Activated CD4-positive, alpha-beta T cell treated with anti-CD3 and anti-CD28 coated beads for 36 hours (primary cell): ENCODE measurements at regions of chr13 and their contacts with region 1.

Region 1: DNA sequence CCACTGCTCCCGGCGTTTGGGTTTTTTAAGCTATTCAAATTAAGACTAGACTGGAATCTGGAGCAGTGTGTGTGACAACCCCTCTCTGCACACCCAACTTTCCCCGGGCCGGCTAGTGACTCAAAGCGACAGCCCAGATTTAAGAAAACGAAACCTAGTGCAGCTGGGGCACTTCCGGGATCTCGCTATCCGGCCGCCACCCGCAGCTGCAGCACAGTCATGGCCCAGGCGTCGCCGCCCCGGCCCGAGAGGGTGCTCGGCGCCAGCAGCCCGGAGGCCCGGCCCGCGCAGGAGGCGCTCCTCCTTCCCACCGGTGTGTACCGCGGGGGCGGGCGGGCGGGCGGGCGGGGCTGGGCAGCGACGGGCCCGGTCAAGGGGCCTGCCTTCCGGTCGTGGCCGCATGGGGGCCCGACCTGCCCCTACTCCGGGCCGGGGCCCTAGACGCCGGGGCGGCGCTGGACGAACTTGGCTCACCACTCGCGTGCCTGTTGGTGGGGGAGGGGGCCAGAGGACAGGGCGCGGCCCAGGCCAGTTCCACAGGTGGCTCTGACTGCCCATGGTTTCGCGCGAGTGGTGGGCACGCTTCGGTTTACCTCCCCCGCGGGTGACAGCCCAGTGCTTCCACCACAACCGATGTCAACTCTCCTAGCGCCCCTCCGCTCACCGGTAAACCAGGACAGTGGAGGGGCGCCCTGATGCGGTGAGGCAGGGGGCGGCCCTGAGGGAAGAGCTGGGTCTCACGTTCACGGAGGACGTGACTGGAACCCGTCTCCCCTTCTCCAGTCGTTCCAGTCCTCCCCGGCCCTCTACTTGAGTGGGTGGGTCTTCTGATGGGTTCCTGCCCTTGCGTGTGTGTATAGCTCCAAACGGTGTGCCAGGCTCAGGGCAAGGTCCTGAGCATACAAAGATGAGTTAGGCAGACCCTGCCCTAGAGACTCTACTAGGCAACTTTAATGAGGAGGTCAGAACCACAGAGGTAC is at the start of gene PHF11:
- DNase-seq: peak; percentile 95
- ATAC-seq: peak; percentile 81
- H3K4me3 Mint-ChIP-seq: peak within 1 kb of the TSS; percentile 91
- H3K27ac Mint-ChIP-seq: peak within 1 kb of the TSS; percentile 99
- H3K4me1 Mint-ChIP-seq: peaks cover 49% of the 10 kb centered on the region
- H3K27me3 Mint-ChIP-seq: no peaks in the 10 kb centered on the region
- total RNA-seq, gene PHF11: 84.0 to 106 TPM

Region 2: DNA sequence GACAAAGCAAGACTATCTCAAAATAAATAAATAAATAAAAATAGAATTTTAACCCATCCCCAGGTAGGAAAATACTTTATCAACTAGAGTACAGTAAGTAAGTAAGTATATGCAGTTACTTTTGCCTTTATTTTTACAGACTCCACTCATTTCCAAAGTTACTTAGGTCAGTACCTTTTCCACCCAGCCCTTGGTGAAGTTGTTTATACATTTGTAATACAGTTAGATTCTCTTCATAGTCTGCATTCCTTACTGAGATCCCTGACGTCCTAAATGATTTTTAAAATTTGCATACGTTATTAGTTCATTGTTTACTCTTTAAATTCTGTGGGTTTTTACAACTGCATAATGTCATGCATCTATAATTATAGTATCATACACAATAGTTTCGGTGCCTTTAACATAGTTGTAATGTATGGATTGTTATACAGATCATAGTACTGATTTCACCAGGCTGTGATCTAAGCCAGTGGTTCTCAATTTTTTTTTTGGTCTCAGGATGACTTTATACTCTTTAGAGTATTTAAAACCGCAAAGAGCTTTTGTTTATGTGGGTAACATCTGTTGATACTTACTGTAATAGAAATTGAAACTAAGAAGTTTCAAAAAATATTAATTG is 41.6 kb before region 1 on chr13:
- CTCF ChIA-PET with region 1: no interaction called
- POLR2A ChIA-PET with region 1: interaction called, 7 read pairs
- intact Hi-C with region 1: loop called in 1 of 2 experiments (anchors 2 kb)
- DNase-seq: no peak
- ATAC-seq: peak; percentile 87
- H3K4me3 Mint-ChIP-seq: peak overlapping the region; percentile 26
- H3K27ac Mint-ChIP-seq: peak overlapping the region; percentile 59
- H3K4me1 Mint-ChIP-seq: peaks cover 28% of the 10 kb centered on the region
- H3K27me3 Mint-ChIP-seq: no peaks in the 10 kb centered on the region

Region 3: DNA sequence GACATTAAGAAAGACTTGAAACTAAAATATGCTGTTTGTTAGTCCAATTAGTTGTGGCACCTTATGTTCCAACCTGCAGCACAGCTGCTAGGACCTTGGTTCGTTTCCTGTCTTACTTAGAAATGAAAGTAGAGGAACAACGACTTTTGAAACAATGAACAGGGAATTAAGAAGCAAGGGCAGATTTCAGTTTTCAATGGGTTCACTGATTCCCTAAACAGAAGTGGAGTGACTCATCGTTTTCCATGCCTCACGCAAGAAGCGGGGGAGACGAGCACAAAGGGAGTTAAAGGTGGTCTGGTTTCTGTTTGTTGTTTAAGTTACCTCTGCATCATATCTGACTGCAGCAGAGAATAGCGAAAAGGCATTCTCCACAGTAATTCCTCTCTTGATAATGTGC is 44.5 kb after region 1 on chr13:
- CTCF ChIA-PET with region 1: interaction called, 3 read pairs
- POLR2A ChIA-PET with region 1: no interaction called
- intact Hi-C with region 1: loop called in 1 of 2 experiments (anchors 2 kb)
- DNase-seq: no peak
- ATAC-seq: peak; percentile 44
- H3K4me3 Mint-ChIP-seq: peak overlapping the region; percentile 58
- H3K27ac Mint-ChIP-seq: peak overlapping the region; percentile 91
- H3K4me1 Mint-ChIP-seq: peaks cover 21% of the 10 kb centered on the region
- H3K27me3 Mint-ChIP-seq: no peaks in the 10 kb centered on the region

Region 4: DNA sequence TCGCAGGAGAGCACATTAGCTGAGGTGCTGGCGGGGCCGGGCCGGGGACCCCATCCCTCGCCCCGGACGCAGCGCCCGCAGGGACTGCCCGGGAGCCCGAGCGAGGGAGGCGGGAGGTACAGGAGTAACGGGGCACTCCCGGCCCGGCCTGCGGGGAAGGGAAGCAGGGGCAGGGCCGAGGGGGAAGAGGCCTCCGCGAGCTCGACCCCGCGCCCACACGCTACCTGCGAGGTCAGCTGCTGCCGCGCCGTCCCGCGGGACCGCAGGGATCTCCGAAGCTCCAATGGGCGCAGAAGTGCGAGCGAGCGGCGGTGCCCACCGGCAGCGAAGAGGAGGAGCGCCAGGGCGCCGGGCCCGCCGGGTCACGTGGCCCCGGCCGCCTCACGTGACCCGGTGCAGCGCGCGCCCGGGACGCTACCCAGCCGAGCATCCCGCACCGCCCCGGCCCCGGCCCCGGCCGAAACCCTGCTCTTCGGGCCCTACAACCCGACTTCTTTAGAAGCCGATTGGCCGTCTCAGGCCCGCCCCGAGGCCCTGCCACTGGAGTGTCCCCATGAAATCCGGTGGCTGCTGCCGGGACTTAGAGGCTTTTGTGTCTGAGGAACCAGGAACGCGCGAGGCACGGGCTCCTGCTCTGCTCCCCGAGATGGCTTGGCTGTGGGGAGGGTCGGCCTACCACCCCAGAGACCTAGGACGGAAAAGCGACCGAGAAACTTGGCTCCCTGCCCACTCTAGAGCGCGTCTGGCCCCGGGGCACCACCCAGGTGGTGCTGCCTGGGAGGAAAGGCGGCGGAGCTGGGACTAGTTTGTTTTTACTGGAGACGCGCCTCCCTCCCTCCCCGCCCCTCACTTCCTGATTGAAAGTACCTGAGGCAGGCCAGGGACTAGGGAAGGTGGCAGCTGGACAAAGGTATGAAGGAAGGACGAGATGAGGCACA is 89.4 kb after region 1 on chr13 and contains the start of gene RCBTB1:
- CTCF ChIA-PET with region 1: no interaction called
- POLR2A ChIA-PET with region 1: interaction called, 3 read pairs
- intact Hi-C with region 1: loop called (anchors 1 to 5 kb)
- DNase-seq: peak; percentile 80
- ATAC-seq: peak; percentile 95
- H3K4me3 Mint-ChIP-seq: peak within 1 kb of the TSS; percentile 99
- H3K27ac Mint-ChIP-seq: peak within 1 kb of the TSS; percentile 95
- H3K4me1 Mint-ChIP-seq: peaks cover 29% of the 10 kb centered on the region
- H3K27me3 Mint-ChIP-seq: no peaks in the 10 kb centered on the region
- total RNA-seq, gene RCBTB1: 9.8 to 14.9 TPM

Region 5: DNA sequence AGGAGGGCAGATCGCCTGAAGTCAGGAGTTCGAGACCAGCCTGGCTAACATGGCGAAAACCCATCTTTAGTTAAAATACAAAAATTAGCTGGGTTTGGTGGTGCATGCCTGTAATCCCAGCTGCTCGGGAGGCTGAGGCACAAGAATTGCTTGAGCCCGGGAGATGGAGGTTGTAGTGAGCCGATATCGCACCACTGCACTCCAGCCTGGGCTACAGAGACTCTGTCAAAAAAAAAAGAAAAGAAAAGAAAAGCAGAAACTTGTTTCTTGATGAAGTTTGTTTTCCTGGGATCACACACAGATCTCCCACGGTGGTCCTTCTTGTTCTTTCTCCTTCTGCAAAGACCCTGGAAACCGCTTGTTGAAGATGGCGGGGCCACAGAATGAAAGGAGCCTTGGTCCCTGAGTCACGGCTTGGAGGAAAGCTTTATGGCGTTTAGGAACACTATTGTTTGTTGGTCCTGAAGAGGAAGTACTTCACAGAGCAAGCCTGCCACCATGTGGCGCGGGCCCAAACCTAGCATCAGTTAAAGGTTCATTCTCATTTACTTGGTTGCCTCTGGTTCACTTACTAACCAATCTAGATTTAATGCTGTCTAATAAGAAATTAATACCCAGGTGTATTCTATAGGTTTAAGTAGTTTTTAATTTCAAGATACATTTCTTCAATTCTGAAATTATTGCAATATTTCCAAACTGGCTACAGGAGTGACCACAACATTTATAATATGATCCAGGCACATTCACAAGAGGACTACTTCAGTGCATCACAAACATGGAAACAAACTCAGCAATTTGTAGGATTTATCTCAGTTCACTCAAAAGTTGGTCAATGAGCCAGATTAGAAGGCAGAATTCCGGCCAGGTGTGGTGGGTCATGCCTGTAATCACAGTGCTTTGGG is 110.9 kb after region 1 on chr13:
- CTCF ChIA-PET with region 1: interaction called, 4 read pairs
- POLR2A ChIA-PET with region 1: no interaction called
- intact Hi-C with region 1: loop called in 1 of 2 experiments (anchors 2 kb)
- DNase-seq: peak; percentile 90
- ATAC-seq: peak; percentile 98
- H3K4me3 Mint-ChIP-seq: peak overlapping the region; percentile 68
- H3K27ac Mint-ChIP-seq: peak overlapping the region; percentile 75
- H3K4me1 Mint-ChIP-seq: peaks cover 2% of the 10 kb centered on the region
- H3K27me3 Mint-ChIP-seq: no peaks in the 10 kb centered on the region

Region 6: DNA sequence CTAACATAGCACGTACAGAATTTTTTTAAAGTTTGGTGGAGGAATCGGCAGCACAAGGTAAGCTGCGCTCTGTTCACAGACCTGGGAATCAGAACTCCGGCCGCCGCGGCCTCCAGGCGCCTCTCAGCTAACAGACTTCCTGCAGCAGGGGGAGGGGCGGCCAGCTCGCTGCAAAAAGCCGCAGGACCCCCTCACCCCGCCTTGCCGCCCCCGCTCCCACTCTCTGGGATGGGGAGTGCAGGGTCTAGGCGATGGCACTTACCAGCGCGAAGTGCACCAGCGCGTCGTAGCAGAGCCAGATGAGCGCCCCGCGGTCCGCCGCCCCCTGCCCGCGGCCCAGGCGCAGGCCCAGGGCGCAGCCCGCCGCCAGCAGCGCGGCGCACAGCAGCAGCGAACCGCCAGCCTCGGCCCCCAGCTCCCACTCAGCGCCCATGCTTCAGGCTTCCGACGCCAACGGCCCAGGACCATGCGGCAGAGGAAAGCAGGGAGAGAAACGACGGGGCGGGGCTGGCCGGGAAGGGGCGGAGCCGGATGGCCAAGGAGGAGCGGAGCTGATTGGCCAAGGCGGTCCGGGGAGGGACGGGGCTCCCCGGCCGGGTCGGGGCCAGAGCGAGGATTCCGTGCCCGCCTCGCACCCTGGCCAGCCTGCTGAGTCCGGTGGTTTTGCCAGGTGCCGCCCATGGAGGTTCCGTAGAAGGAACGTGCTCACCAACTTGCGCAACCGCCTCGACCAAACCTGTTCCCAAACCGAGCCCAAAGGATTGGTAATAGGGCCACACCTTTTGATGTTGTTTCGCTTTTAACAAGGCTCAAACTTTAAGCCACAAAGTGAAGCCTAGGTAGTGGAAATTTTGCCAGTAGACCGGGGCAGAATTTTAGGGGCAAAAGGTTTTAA is 195.2 kb after region 1 on chr13 and contains the start of gene EBPL:
- CTCF ChIA-PET with region 1: no interaction called
- POLR2A ChIA-PET with region 1: no interaction called
- intact Hi-C with region 1: loop called in 1 of 2 experiments (anchors 2 kb)
- DNase-seq: peak; percentile 95
- ATAC-seq: peak; percentile 98
- H3K4me3 Mint-ChIP-seq: peak within 1 kb of the TSS; percentile 87
- H3K27ac Mint-ChIP-seq: peak within 1 kb of the TSS; percentile 84
- H3K4me1 Mint-ChIP-seq: peaks cover 30% of the 10 kb centered on the region
- H3K27me3 Mint-ChIP-seq: no peaks in the 10 kb centered on the region
- total RNA-seq, gene EBPL: 40.7 to 55.8 TPM

Region 7: GRCh38 chr13:50401049-50401505 is 905.0 kb after region 1 on chr13:
- CTCF ChIA-PET with region 1: no interaction called
- POLR2A ChIA-PET with region 1: no interaction called
- intact Hi-C with region 1: no loop called
- DNase-seq: no peak
- ATAC-seq: no peak
- H3K4me3 Mint-ChIP-seq: no peak overlapping the region
- H3K27ac Mint-ChIP-seq: no peak overlapping the region
- H3K4me1 Mint-ChIP-seq: no peaks in the 10 kb centered on the region
- H3K27me3 Mint-ChIP-seq: peaks cover 3% of the 10 kb centered on the region